PC-9 (cell line): ENCODE measurements at regions of chr1 and their contacts with region 1.

Region 1: DNA sequence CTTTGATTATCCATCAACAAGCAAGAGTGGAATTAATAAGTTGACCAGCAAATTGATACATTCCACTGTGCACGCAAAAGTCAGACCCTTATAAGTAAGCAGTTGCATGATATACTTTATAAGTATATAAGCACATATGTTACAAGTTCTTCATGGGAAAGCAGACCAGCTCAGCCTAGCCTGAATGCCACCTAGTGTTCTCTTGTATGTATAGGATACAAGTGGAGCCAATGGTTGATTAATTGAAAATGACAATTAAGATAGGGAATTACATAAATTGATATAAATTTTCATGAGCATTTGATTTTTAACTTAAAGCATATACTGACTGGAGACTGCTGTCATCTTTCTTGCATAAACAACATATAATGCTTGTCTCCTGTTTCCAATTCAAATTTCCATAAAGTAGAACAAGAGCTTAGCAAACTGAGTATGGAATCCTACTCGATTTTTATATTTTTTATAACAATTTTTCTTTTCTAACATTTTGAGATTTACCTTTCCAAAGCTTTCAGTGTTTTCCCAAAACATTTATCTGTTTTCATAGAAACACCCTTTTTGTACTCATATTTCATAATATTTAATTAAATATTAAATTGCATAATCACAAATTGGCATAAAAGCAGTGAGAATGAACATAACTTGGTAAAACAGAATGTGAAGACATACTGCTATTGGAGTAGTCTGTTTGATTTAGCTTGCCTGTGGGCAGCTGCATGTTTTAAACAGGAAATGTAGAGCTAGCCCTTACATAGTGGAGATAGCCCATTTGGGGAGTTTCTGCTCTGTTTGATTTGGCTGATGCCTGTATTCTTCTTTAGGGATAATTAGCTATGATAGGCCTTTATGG is 62.8 kb downstream of the MAGI3 start:
- DNase-seq: peak in 1 of 2 experiments; percentile 50
- H3K4me3 ChIP-seq: no peak overlapping the region
- H3K27ac ChIP-seq: no peak overlapping the region
- H3K4me1 ChIP-seq: peaks cover 20% of the 10 kb centered on the region
- H3K27me3 ChIP-seq: no peaks in the 10 kb centered on the region
- CTCF ChIP-seq: peak; percentile 81

Region 2: GRCh38 chr1:112818990-112819689 is 634.0 kb before region 1 on chr1:
- CTCF ChIA-PET with region 1: no interaction called
- POLR2A ChIA-PET with region 1: no interaction called
- intact Hi-C with region 1: no loop called
- DNase-seq: peak in 1 of 2 experiments; percentile 58
- H3K4me3 ChIP-seq: no peak overlapping the region
- H3K27ac ChIP-seq: no peak overlapping the region
- H3K4me1 ChIP-seq: peaks cover 15% of the 10 kb centered on the region
- H3K27me3 ChIP-seq: no peaks in the 10 kb centered on the region
- CTCF ChIP-seq: no peak

Region 3: DNA sequence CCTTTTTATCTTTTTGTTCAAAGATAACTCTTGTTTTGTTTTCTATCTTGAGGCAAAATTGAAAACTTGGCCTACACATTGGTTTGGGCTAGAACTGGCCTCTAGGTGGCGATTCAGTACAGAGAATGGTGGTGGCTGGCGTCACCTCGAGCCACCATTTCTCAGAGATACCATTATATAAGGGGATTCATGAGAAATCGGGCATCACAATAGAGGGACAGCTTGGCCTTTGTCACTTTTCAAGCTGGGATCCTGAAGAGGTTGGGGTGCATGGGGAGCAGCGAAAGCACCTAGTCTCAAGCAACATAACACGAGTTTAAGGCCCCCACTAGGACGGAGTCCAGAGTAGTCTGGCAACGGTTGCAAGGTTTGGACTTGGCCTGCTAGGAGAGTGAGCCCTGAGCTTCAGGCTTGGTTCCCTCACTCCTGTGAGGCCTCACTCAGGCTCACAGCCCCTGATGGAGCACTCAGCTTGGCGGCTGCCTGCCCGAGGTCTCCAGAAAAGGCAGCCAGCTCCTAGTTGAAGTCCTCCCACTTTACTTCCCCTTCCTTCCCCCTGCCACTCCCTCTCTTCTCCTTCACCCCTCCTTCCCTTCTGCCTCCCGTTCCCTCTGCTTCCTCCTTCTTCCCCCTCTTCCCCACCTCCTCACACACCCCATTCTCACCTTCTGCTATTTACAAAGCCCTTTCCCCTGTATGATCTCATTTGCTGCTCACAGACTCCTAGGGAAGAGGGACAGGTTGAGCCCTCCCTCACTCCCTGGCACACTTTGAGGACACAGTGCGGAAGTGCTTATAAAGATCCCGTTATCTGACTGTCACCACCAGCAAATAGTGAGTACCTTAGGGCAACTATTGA is 312.3 kb before region 1 on chr1:
- CTCF ChIA-PET with region 1: interaction called, 3 read pairs
- POLR2A ChIA-PET with region 1: no interaction called
- intact Hi-C with region 1: loop called (anchors 1 kb)
- DNase-seq: peak; percentile 58 to 61
- H3K4me3 ChIP-seq: no peak overlapping the region
- H3K27ac ChIP-seq: peak overlapping the region; percentile 31; the same call in 1 of the 2 replicates
- H3K4me1 ChIP-seq: peaks cover 16% of the 10 kb centered on the region
- H3K27me3 ChIP-seq: no peaks in the 10 kb centered on the region
- CTCF ChIP-seq: peak; percentile 99

Region 4: GRCh38 chr1:113307771-113308445 is 145.2 kb before region 1 on chr1:
- CTCF ChIA-PET with region 1: no interaction called
- POLR2A ChIA-PET with region 1: no interaction called
- intact Hi-C with region 1: loop called (anchors 5 kb)
- DNase-seq: peak; percentile 10 to 99
- H3K4me3 ChIP-seq: peak overlapping the region; percentile 25; the same call in 1 of the 2 replicates
- H3K27ac ChIP-seq: peak overlapping the region; percentile 95
- H3K4me1 ChIP-seq: peaks cover 27% of the 10 kb centered on the region
- H3K27me3 ChIP-seq: no peaks in the 10 kb centered on the region
- CTCF ChIP-seq: no peak

Region 5: GRCh38 chr1:113396585-113396984 is 56.6 kb before region 1 on chr1:
- CTCF ChIA-PET with region 1: interaction called, 4 read pairs
- POLR2A ChIA-PET with region 1: interaction called, 21 read pairs
- intact Hi-C with region 1: loop called (anchors 2 kb)
- DNase-seq: peak; percentile 22 to 86
- H3K4me3 ChIP-seq: peak overlapping the region; percentile 3; the same call in 1 of the 2 replicates
- H3K27ac ChIP-seq: peak overlapping the region; percentile 27
- H3K4me1 ChIP-seq: peaks cover 47% of the 10 kb centered on the region
- H3K27me3 ChIP-seq: no peaks in the 10 kb centered on the region
- CTCF ChIP-seq: no peak

Region 6: DNA sequence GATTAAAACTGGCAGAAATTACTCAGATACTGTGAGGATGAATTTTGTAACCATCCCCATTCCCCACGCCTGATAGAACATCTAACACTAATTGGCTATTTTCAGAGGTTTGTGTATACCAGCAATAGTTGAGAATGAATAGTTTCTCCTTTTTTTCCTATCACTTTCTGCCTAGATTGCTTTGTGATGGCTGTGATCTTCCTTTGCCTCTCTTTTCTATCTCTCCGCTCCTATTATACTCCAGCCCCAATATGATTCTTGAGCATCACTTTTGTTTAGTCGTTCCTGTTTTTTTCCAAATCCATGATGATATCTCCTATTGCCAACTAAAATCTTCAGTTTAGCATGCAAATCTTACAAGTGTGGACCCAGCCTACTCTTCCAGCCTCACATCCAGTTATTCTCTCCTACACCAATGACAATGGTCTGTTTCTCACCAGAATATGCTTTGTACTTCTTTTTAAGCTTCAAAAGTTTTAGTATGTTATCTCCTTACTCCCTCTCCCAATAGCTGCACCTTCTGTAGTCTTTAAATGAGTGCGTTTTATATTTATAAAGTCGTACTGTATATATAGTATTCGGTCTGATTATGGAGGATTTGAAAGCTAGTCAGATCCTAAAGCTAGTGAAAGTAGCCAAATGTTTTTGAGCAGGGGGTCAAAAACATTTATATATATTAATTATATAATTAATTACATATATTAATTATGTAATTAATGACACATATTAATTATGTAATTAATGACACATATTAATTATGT is 37.7 kb before region 1 on chr1:
- CTCF ChIA-PET with region 1: no interaction called
- POLR2A ChIA-PET with region 1: no interaction called
- intact Hi-C with region 1: no loop called
- DNase-seq: no peak
- H3K4me3 ChIP-seq: no peak overlapping the region
- H3K27ac ChIP-seq: no peak overlapping the region
- H3K4me1 ChIP-seq: no peaks in the 10 kb centered on the region
- H3K27me3 ChIP-seq: no peaks in the 10 kb centered on the region
- CTCF ChIP-seq: no peak

Region 7: GRCh38 chr1:113488576-113489177 is 35.5 kb after region 1 on chr1:
- CTCF ChIA-PET with region 1: no interaction called
- POLR2A ChIA-PET with region 1: interaction called, 27 read pairs
- intact Hi-C with region 1: no loop called
- DNase-seq: no peak
- H3K4me3 ChIP-seq: no peak overlapping the region
- H3K27ac ChIP-seq: no peak overlapping the region
- H3K4me1 ChIP-seq: no peaks in the 10 kb centered on the region
- H3K27me3 ChIP-seq: no peaks in the 10 kb centered on the region
- CTCF ChIP-seq: no peak

Region 8: GRCh38 chr1:113534130-113534817 is 81.1 kb after region 1 on chr1:
- CTCF ChIA-PET with region 1: no interaction called
- POLR2A ChIA-PET with region 1: no interaction called
- intact Hi-C with region 1: no loop called
- DNase-seq: no peak
- H3K4me3 ChIP-seq: no peak overlapping the region
- H3K27ac ChIP-seq: no peak overlapping the region
- H3K4me1 ChIP-seq: no peaks in the 10 kb centered on the region
- H3K27me3 ChIP-seq: no peaks in the 10 kb centered on the region
- CTCF ChIP-seq: no peak

Region 9: DNA sequence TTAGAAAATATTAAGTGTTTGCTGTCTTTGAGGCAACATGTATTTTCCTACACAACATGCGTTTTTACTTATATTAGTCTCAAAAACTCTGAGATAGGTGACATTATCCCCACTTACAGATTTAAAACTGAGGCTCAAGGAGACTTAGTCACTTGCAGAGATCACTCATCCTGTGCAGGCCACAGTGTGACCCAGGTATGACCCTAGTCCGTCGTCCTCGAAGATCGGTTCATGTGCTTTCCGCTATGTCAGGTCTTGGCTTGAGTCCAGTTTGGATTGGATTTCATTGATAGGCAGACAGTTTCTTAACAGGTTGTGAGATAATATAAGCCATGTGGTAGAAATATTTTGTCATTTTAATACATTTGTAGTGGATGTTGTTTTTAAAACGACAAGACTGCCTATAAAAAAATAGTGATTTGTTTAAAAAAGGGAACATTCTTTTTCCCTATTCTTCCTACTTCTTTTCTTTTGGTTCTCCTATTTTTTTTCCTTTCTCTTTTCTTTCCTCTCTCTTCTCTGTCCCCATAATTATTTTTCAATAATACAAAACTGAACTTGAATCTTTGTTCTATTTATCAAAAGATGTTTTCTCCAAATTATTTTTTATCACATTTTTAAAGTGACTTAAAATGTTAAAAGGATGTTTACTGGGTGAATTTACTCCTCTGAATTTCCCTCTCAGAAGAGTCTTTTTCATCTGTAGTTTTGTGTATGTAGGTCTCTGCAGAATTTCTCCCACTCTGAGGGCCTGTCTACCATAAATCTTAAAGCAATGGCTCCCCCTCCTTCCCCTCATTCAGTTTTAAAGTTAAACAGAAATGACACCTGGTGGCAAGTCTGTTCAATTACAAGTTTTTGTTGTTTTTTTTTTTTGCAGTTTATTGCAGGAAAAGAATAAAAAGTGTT is 224.4 kb after region 1 on chr1:
- CTCF ChIA-PET with region 1: no interaction called
- POLR2A ChIA-PET with region 1: no interaction called
- intact Hi-C with region 1: loop called (anchors 10 kb)
- DNase-seq: peak in 1 of 2 experiments; percentile 59
- H3K4me3 ChIP-seq: no peak overlapping the region
- H3K27ac ChIP-seq: no peak overlapping the region
- H3K4me1 ChIP-seq: peaks cover 17% of the 10 kb centered on the region
- H3K27me3 ChIP-seq: no peaks in the 10 kb centered on the region
- CTCF ChIP-seq: peak; percentile 97